Esophagus muscularis mucosa (tissue), 4 donors: ENCODE measurements at regions of chr4 and their contacts with region 1.

Region 1: GRCh38 chr4:22410645-22411247 is 105.1 kb downstream of the ADGRA3 start:
- DNase-seq: no peak
- H3K4me3 ChIP-seq: no peak overlapping the region
- H3K27ac ChIP-seq: no peak overlapping the region
- H3K4me1 ChIP-seq: no peaks in the 10 kb centered on the region
- H3K27me3 ChIP-seq: no peaks in the 10 kb centered on the region
- CTCF ChIP-seq: peak in 2 of 3 experiments; percentile 64 to 69
- EP300 ChIP-seq: no peak
- POLR2A ChIP-seq: no peak

Region 2: DNA sequence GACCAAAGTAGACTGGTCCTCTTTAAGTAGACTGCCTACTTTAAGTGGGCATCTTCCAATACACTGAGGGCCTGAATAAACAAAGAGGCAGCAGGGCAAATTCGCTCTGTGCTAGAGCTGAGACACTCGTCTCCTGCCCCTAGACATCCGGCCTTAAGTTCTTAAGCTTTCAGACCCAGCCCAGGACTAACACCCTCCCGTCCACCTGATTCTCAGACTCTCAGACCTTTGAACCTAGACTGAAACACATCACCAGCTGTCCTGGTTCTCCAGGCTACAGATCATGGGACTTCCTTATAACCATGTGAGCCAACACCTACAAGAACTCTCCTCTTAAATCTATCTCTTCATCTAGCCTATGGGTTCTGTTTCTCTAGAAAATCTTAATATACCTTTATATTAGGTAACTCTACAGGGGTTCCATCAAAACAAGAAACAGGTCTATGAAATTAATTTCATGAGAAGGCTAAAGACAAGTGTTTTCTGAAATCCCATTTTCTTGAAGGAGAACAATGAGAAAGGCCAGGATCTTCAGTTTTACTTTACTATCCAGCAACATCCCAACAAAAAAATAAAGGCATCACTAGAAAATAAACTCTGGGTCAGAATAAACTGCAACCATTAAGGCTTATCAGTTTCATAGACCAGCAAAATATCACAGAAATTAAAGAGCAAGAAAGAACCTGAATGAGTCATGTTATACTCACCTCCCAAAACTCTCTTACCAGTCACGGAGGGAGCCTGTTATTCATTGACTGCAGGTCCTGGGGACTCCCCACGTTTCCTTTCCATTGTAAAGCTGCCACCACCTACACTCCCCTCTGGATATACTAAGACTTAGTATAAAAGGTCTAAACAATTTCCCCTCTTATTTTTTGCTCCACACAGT is 90.3 kb after region 1 on chr4:
- intact Hi-C with region 1: no loop called
- DNase-seq: peak; percentile 62
- H3K4me3 ChIP-seq: no peak overlapping the region
- H3K27ac ChIP-seq: peak overlapping the region; percentile 18 to 61 (median 40)
- H3K4me1 ChIP-seq: peaks cover 24 to 56% (median 39%) of the 10 kb centered on the region in 4 donors
- H3K27me3 ChIP-seq: no peaks in the 10 kb centered on the region
- CTCF ChIP-seq: no peak
- EP300 ChIP-seq: no peak
- POLR2A ChIP-seq: no peak

Region 3: DNA sequence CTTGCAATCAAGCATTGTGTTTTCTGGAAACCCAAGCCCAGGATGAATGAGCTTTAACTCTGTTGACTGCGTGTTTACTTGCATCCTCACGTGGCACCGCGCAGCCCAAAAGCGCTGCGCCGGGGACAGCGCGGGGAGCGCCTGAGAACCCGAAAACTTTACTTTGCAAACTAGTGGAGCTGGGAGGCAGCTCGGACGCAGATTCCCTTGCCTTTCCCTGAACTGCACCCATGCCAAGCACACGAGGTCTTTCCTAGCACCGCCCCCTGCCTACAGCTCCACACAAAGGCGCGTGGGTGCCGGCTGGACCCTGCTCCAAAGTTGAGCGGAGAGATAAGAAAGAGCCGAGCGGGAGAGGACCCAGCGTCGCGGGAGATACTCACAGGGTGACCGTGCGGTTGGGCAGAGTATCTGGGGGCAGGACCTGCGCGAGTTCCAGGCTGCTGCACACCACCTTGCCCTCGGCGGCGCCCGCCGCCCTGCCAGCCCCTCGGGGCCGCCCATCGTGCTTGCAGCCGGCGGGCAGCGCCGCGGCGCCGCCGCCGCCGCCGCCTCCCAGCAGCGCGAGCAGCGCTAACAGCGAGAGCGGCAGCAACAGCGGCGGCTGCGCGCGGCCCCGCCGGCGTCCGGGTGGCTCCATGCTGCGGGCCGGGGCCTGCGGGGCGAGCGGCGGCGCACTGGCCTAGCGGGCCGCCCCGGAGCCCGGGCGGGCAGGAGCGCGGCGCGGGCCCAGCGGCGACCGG is 104.6 kb after region 1 on chr4:
- intact Hi-C with region 1: loop called (anchors 5 kb)
- DNase-seq: no peak
- H3K4me3 ChIP-seq: peak overlapping the region; percentile 63 to 72 (median 67)
- H3K27ac ChIP-seq: peak overlapping the region; percentile 77 to 88 (median 84)
- H3K4me1 ChIP-seq: peaks cover 14 to 36% (median 25%) of the 10 kb centered on the region in 4 donors
- H3K27me3 ChIP-seq: no peaks in the 10 kb centered on the region
- CTCF ChIP-seq: peak in 1 of 3 experiments; percentile 28
- EP300 ChIP-seq: no peak
- POLR2A ChIP-seq: no peak

Region 4: GRCh38 chr4:22607382-22607781 is 196.6 kb after region 1 on chr4:
- intact Hi-C with region 1: loop called (anchors 5 kb)
- DNase-seq: no peak
- H3K4me3 ChIP-seq: no peak overlapping the region
- H3K27ac ChIP-seq: no peak overlapping the region
- H3K4me1 ChIP-seq: peaks cover 0 to 7% (median 0%) of the 10 kb centered on the region in 4 donors
- H3K27me3 ChIP-seq: no peaks in the 10 kb centered on the region
- CTCF ChIP-seq: peak; percentile 57 to 73 (median 63)
- EP300 ChIP-seq: no peak
- POLR2A ChIP-seq: no peak

Region 5: DNA sequence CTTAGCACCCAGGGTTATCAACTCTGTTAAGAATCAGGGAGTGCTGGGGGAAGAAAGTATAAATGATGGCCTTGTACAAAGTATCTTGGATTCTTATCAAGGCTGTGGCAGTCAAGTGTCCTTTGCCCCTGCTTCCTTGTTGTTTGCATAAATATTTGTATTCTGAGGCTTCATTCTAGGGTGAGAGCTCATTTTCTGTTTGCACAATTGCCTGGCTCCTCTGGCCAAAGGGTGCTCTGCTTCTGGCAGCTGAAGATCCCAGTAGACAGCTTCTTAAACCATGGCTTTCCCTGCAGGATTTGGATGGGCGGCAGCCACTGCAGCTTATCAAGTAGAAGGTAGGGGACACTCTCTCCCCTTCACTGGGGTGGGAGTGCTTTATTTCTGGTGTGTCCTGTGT is 282.0 kb after region 1 on chr4 and contains the start of gene GBA3:
- intact Hi-C with region 1: loop called (anchors 5 kb)
- DNase-seq: no peak
- H3K4me3 ChIP-seq: no peak within 1 kb of the TSS
- H3K27ac ChIP-seq: no peak within 1 kb of the TSS
- H3K4me1 ChIP-seq: no peaks in the 10 kb centered on the region
- H3K27me3 ChIP-seq: no peaks in the 10 kb centered on the region
- CTCF ChIP-seq: no peak
- EP300 ChIP-seq: no peak
- POLR2A ChIP-seq: no peak
- total RNA-seq, gene GBA3: not detected